H1 (cell line): ENCODE measurements at regions of chr6 and their contacts with region 1.

Region 1: DNA sequence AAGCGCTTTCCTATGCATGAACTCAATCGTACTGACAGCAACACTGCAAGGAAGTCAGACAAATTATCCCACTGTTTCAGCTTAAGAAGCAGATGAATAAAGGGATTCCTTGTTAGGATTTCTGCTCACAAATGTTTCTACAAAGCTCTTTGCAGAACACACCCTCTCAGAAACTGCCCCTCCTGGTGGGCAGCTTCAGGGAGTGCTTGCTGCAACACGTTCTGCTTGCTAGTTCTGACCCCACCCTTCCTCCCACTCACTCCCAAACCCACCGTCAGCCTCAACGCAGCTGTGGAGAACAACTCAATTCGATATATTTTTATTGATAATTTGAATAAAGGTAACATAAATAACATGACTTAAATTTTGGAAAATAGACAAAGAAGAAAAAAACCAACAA is 250.8 kb upstream of the PRDM1 start:
- DNase-seq: peak; percentile 56
- H3K4me3 ChIP-seq: no peak overlapping the region
- H3K27ac ChIP-seq: no peak overlapping the region
- H3K4me1 ChIP-seq: no peaks in the 10 kb centered on the region
- H3K27me3 ChIP-seq: no peaks in the 10 kb centered on the region
- CTCF ChIP-seq: peak; percentile 66 to 83 (median 76)
- EP300 ChIP-seq: no peak
- POLR2A ChIP-seq: no peak
- RAD21 ChIP-seq: peak; percentile 69 to 77

Region 2: DNA sequence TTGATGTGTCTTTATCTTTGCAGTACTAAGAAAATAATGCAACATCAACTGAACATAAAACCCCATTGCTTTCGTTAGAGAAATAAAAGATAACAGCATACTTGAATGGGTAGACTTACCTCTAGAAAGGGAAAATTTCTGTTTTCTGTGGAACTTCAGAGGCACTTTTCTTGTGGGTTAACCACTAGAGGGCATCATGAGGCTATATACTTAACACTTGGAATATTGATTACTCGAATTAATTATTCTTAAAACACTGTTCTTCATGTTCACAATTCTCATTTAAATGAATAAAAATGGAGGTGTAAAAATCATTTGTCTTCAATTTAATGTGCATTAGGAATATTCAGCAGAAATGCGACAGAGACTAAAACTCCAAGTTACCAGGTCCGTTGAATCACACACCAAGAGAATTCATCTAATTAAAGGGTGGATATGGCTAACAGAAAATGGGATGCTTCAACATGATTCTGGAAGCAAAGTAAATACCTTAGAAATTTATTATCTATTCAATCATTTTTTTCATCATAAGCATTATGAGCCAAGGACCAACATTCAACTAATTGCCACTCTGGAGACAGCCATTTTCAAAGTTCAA is 101.7 kb before region 1 on chr6:
- CTCF ChIA-PET with region 1: interaction called, 18 read pairs
- POLR2A ChIA-PET with region 1: no interaction called
- DNase-seq: no peak
- H3K4me3 ChIP-seq: no peak overlapping the region
- H3K27ac ChIP-seq: no peak overlapping the region
- H3K4me1 ChIP-seq: no peaks in the 10 kb centered on the region
- H3K27me3 ChIP-seq: no peaks in the 10 kb centered on the region
- CTCF ChIP-seq: peak in 2 of 3 experiments; percentile 36 to 46; a peak in 2 of 4 replicates
- EP300 ChIP-seq: no peak
- POLR2A ChIP-seq: no peak
- RAD21 ChIP-seq: peak; percentile 69 to 71

Region 3: GRCh38 chr6:105851113-105851580 is 15.8 kb after region 1 on chr6:
- CTCF ChIA-PET with region 1: interaction called, 11 read pairs
- POLR2A ChIA-PET with region 1: no interaction called
- DNase-seq: no peak
- H3K4me3 ChIP-seq: no peak overlapping the region
- H3K27ac ChIP-seq: no peak overlapping the region
- H3K4me1 ChIP-seq: no peaks in the 10 kb centered on the region
- H3K27me3 ChIP-seq: no peaks in the 10 kb centered on the region
- CTCF ChIP-seq: no peak
- EP300 ChIP-seq: no peak
- POLR2A ChIP-seq: no peak
- RAD21 ChIP-seq: no peak